MCF 10A (cell line): ENCODE measurements at regions of chr19 and their contacts with region 1.

Region 1: DNA sequence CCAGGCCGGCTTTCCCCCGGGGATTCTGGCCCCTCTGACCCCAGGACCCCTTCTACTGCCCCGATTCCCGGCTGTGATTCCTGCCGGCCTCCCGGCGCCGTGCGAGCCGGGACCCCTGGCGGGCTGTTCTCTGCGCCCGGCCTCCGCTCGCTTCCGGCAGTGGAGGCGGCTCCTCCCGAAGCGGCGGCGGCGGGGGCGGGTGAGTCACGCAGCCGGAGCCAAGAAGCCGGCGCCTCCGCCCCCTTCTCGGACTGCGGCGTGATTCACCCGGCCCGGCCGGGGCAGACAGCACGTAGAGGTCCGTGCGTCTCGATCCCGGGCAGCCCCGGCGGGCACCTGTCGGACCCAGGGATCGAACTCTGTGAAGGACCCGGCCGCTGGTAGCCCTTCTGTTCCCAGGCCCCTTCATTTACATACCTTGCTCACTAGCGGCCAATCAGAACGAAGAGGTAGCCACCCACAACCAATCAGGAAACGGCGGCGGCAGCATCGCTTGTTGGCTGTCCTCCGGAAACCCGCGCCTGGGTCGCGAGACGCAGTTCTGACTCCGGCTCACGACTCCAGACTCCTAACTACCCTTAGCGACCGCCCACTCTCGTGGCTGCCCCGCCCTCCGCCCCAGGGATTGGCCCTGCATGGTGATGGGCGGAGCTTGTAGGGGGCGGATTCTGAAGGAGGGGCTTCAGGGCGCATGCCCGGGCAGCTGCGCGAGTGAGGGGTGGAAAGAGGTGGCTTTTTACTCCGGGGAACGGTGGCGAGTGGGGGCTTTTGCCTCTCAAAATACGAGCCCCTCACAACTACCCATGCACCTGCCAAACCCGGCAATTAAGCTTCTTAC is at the start of gene SERTAD1:
- DNase-seq: peak; percentile 99
- H3K4me3 Mint-ChIP-seq: peak within 1 kb of the TSS; percentile 95
- H3K27ac Mint-ChIP-seq: peak within 1 kb of the TSS; percentile 97
- H3K4me1 Mint-ChIP-seq: no peaks in the 10 kb centered on the region
- H3K27me3 Mint-ChIP-seq: no peaks in the 10 kb centered on the region
- CTCF ChIP-seq: peak; percentile 86
- total RNA-seq, gene SERTAD1: 16.2 and 17.9 TPM in 2 replicates

Region 2: GRCh38 chr19:40403262-40403984 is 22.2 kb before region 1 on chr19:
- CTCF ChIA-PET with region 1: interaction called, 13 read pairs
- POLR2A ChIA-PET with region 1: interaction called, 23 read pairs
- intact Hi-C with region 1: no loop called
- DNase-seq: peak; percentile 92
- H3K4me3 Mint-ChIP-seq: peak overlapping the region; percentile 79
- H3K27ac Mint-ChIP-seq: no peak overlapping the region
- H3K4me1 Mint-ChIP-seq: peaks cover 20% of the 10 kb centered on the region
- H3K27me3 Mint-ChIP-seq: no peaks in the 10 kb centered on the region
- CTCF ChIP-seq: peak; percentile 6

Region 3: GRCh38 chr19:40529093-40529954 is 103.7 kb after region 1 on chr19:
- CTCF ChIA-PET with region 1: interaction called, 4 read pairs
- POLR2A ChIA-PET with region 1: interaction called, 4 read pairs
- intact Hi-C with region 1: loop called (anchors 2 kb)
- DNase-seq: peak; percentile 79
- H3K4me3 Mint-ChIP-seq: peak overlapping the region; percentile 64
- H3K27ac Mint-ChIP-seq: no peak overlapping the region
- H3K4me1 Mint-ChIP-seq: peaks cover 14% of the 10 kb centered on the region
- H3K27me3 Mint-ChIP-seq: no peaks in the 10 kb centered on the region
- CTCF ChIP-seq: peak; percentile 95

Region 4: DNA sequence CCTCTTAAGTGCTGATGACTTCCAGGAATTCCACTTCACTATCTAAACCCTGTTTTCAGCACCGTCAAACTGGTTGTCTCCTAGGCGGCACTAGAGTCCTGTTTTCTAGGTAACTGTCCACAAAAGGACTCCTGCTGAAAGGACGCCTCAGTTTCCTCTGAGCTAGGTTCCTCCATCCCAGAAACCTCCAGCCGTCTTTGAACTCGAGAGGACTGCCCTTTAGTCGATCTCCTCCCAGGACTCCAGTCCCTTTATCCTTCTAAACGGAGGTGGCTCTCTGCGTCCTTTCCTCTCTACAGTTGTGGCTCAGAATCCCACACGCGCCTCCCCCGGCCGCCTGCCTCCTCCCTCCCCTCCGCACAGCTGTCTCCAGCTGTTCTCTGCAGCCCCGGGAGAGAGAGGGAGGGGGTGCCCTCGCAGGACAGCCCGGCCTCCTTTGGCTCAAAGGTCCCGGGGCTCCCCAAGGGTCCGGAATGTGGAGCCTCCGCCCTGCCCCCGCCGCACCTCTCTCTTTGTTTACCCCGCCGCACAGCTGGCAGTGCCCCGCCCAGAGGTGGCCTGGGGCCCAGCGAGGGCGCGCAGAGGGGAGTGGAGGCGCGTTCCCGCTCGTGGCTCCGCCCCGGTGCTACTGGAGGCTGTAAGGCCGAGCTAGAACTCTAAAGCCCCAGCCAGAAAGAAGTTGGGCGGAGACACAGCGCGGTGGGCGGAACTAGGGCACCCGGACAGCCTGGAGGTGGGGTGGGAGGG is 177.9 kb after region 1 on chr19:
- CTCF ChIA-PET with region 1: interaction called, 10 read pairs
- POLR2A ChIA-PET with region 1: interaction called, 39 read pairs
- intact Hi-C with region 1: no loop called
- DNase-seq: peak; percentile 99
- H3K4me3 Mint-ChIP-seq: peak overlapping the region; percentile 79
- H3K27ac Mint-ChIP-seq: peak overlapping the region; percentile 69
- H3K4me1 Mint-ChIP-seq: peaks cover 47% of the 10 kb centered on the region
- H3K27me3 Mint-ChIP-seq: no peaks in the 10 kb centered on the region
- CTCF ChIP-seq: no peak